Motor neuron (in vitro differentiated cells): ENCODE measurements at regions of chr17 and their contacts with region 1.

Region 1: DNA sequence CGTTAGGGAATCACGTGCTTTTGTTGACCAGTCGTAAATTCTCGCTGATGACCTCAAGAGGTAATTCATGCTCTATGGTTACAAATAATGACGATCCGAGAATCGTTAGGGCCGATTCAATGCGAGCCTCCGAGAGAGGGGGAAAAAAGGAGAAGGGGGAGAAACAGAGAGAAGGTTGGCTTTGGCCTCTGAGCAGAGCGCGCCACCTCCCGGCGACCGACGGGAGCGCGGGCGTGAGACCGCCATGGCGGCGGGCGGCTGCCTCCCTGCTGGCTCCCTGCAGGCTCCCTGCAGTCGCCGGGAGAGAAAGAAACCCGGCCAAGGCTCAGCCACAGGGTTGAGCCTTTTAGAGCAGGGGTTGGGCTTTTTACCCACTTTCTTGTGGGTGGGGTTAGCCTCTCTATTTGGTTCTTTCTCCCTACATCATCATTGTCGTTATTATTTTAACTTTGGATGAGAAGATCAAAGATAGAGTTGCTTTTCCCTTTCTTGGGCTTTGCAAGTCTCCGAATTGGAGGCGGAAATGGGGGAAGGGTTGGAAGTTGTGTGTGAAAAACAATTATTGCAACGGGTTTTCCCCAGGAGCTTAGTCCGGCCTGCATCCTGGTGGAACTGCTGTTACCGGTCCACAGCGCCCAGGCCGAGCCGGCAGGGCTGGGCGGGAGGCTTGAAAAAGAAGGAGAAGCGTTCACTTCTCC is 410 bp upstream of the HOXB5 start:
- ATAC-seq: peak; percentile 38 to 61 (median 48)
- H3K4me3 ChIP-seq: peak overlapping the region; percentile 62 to 91 (median 83)
- H3K27ac ChIP-seq: peak overlapping the region; percentile 90 to 94
- H3K4me1 ChIP-seq: peaks cover 11 to 50% of the 10 kb centered on the region in 2 donors

Region 2: GRCh38 chr17:48335858-48336500 is 258.0 kb before region 1 on chr17:
- in situ Hi-C with region 1: loop called in 2 of 9 experiments (anchors 10 kb)
- ATAC-seq: peak; percentile 41 to 72 (median 59)
- H3K4me3 ChIP-seq: no peak overlapping the region
- H3K27ac ChIP-seq: no peak overlapping the region
- H3K4me1 ChIP-seq: peaks cover 0 to 32% of the 10 kb centered on the region in 2 donors

Region 3: GRCh38 chr17:48441231-48441711 is 152.7 kb before region 1 on chr17:
- in situ Hi-C with region 1: no loop called
- ATAC-seq: no peak
- H3K4me3 ChIP-seq: no peak overlapping the region
- H3K27ac ChIP-seq: peak overlapping the region in 1 of 2 donors; percentile 80
- H3K4me1 ChIP-seq: peaks cover 25 to 53% of the 10 kb centered on the region in 2 donors

Region 4: DNA sequence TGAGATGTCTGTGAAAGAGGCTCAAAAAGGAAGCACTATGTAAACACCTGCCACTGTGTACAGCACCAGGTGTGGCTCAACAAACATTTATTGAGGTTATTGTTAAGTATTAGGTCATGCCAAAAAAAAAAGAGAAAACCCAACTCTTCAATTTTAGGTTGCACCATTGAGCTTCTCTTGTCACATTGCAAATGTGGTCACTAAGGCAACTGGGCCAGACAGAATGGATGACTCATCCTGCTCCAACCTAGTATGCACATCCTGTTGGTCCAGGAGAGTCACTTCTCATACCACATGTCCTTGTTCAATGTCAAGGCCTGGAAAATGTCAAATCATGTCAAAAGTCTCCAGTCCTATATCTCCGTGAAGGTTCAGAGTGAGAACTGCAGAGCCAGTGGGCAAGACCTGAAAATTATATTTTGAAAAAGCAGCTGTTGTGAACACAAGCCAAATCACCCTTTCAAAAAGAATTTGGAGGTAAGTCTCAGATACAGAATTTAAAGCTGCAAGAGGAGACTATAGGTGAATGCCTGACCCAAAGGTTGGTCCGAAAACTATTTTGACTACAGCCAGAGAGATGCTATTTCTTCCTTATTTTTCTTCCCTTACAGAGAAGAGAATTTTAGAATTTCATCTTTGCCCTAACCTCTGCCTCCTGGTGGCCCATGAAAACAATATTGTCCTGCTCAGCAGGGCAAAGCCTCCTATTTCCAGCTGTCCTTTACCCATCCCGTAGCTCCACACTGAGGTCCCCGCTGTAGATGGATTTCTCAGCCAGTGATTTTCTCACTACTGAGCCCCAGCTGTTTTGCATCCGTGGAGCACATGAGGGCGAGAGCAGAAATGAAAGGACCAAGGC is 88.0 kb before region 1 on chr17:
- in situ Hi-C with region 1: no loop called
- ATAC-seq: peak; percentile 76 to 99 (median 94)
- H3K4me3 ChIP-seq: no peak overlapping the region
- H3K27ac ChIP-seq: peak overlapping the region in 1 of 2 donors; percentile 22
- H3K4me1 ChIP-seq: peaks cover 22 to 27% of the 10 kb centered on the region in 2 donors